Mammary epithelial cell (primary cell): ENCODE measurements at regions of chr5 and their contacts with region 1.

Region 1: GRCh38 chr5:96934708-96935558 is 947 bp upstream of the LNPEP start:
- DNase-seq: peak; percentile 97
- H3K4me3 ChIP-seq: peak overlapping the region; percentile 85 to 94 (median 86)
- H3K27ac ChIP-seq: peak overlapping the region; percentile 92
- H3K4me1 ChIP-seq: peaks cover 24% of the 10 kb centered on the region
- H3K27me3 ChIP-seq: no peaks in the 10 kb centered on the region
- CTCF ChIP-seq: peak in 1 of 2 donors; percentile 6

Region 2: DNA sequence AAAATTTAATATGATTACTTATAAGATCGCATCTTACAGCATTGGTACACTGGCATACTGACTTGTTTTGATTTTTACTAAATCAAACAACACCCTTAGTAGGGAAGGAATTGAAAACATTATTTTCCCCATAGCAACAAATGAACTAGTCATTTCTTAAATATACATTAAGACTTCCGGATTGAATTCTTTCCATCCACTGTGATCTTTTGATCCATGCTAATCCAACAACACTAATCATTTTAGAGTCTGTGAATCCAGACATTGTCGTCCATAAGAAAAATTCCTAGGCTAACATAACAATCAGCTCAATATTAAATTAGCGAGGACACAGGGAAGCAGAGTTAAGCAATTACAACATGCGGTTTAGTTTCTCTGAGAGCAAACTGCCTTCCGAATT is 105.6 kb before region 1 on chr5:
- CTCF ChIA-PET with region 1: no interaction called
- dilution Hi-C with region 1: loop called (anchors 5 kb)
- in situ Hi-C with region 1: no loop called
- intact Hi-C with region 1: no loop called
- DNase-seq: no peak
- H3K4me3 ChIP-seq: no peak overlapping the region
- H3K27ac ChIP-seq: no peak overlapping the region
- H3K4me1 ChIP-seq: peaks cover 5% of the 10 kb centered on the region
- H3K27me3 ChIP-seq: no peaks in the 10 kb centered on the region
- CTCF ChIP-seq: no peak

Region 3: DNA sequence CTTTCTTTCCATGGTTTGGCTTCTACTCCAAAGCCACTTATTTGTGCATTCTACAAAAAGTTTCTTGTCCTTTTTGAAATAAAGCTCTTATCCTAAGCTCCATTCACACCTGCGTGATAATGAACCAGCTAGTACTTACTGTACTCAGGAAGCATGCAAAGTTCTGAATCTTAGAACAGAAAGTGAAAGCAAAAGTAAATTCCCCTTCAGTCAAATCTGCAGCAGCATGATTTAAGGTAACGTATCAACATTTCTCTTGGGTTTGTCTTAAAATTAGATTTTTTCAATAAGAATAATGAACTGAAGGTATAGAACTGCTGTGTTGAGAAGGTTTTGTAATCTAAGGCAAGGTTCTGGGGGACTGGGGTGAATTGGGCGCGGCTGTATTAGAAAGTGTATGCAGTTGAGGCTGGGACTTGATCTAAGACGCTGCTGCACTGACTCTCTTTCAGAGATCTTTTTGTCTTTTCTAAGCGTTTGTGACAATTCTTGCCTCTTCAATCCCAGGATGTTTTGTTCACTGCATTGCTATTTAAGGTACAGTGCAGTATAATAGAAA is 58.6 kb before region 1 on chr5 and contains the start of gene ERAP2:
- CTCF ChIA-PET with region 1: interaction called, 4 read pairs
- dilution Hi-C with region 1: loop called (anchors 5 kb)
- in situ Hi-C with region 1: no loop called
- intact Hi-C with region 1: loop called (anchors 1 kb)
- DNase-seq: peak; percentile 51
- H3K4me3 ChIP-seq: peak within 1 kb of the TSS; percentile 46 to 75 (median 74)
- H3K27ac ChIP-seq: peak within 1 kb of the TSS; percentile 78
- H3K4me1 ChIP-seq: peaks cover 17% of the 10 kb centered on the region
- H3K27me3 ChIP-seq: no peaks in the 10 kb centered on the region
- CTCF ChIP-seq: no peak
- total RNA-seq, gene ERAP2: 2.8 to 14.3 TPM

Region 4: DNA sequence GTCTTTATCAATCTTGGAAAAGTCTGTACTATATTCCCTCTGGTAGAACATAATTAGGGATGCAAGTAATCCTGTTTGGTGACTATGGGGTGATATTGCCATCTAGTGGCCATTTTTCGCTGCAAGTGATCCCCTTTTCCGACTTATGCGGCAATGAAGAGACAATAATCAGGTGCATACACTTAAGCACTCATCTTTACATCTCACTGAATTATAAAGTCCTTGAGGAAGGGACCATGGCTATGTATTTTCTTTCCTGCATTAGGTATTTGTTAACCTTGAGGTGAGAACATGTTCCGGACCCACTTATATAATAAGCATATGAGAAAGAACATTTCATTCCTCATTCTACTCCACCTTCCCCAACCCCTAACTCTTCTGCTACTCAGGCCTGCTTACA is 227.1 kb after region 1 on chr5:
- CTCF ChIA-PET with region 1: no interaction called
- dilution Hi-C with region 1: no loop called
- in situ Hi-C with region 1: no loop called
- intact Hi-C with region 1: loop called (anchors 2 kb)
- DNase-seq: peak; percentile 65
- H3K4me3 ChIP-seq: no peak overlapping the region
- H3K27ac ChIP-seq: no peak overlapping the region
- H3K4me1 ChIP-seq: no peaks in the 10 kb centered on the region
- H3K27me3 ChIP-seq: no peaks in the 10 kb centered on the region
- CTCF ChIP-seq: peak; percentile 84 to 89